Activated T-helper 1 cell treated with anti-CD3 and anti-CD28 coated beads, Interleukin-12 subunit alpha, Interleukin-12 subunit beta, Interleukin-2, Interleukin-4 antibody, amounts not matched to agents 30 ng/mL and 10 ng/mL and 1 ng/mL, durations not matched to agents 14 hours and 24 hours and 36 hours (primary cell): ENCODE measurements at regions of chr5 and their contacts with region 1.

Region 1: GRCh38 chr5:171907725-171908343 is 98.6 kb downstream of the FBXW11 start:
- DNase-seq: peak; percentile 33
- H3K4me3 Mint-ChIP-seq: no peak overlapping the region
- H3K27ac Mint-ChIP-seq: peak overlapping the region; percentile 89
- H3K4me1 Mint-ChIP-seq: peaks cover 45% of the 10 kb centered on the region
- H3K27me3 Mint-ChIP-seq: no peaks in the 10 kb centered on the region

Region 2: GRCh38 chr5:170638454-170639220 is 1269.2 kb before region 1 on chr5:
- intact Hi-C with region 1: loop called (anchors 2 kb)
- DNase-seq: peak; percentile 38
- H3K4me3 Mint-ChIP-seq: no peak overlapping the region
- H3K27ac Mint-ChIP-seq: no peak overlapping the region
- H3K4me1 Mint-ChIP-seq: no peaks in the 10 kb centered on the region
- H3K27me3 Mint-ChIP-seq: peaks cover 13% of the 10 kb centered on the region

Region 3: DNA sequence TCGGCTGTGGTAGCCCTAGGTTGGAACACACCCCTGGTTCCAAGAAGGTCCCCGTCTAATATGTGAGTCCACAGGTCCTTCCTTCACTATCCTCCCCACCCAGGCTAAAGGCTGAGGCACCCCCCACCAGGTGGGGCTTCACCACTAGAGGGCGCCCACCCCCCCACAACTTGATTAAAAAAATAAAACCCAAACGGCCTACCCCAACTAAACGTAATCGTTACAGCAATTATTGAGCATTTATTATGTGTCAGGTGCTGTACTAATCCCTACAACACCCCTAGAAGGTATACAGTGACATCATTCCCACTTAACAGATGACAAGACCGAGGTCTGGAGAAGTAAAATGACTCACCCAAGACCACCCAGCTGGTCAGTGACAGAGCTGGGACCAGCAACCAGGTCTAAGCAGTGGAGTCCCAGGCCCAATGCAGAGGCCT is 423.4 kb before region 1 on chr5:
- intact Hi-C with region 1: loop called (anchors 1 kb)
- DNase-seq: no peak
- H3K4me3 Mint-ChIP-seq: no peak overlapping the region
- H3K27ac Mint-ChIP-seq: no peak overlapping the region
- H3K4me1 Mint-ChIP-seq: peaks cover 6% of the 10 kb centered on the region
- H3K27me3 Mint-ChIP-seq: peaks cover 4% of the 10 kb centered on the region

Region 4: DNA sequence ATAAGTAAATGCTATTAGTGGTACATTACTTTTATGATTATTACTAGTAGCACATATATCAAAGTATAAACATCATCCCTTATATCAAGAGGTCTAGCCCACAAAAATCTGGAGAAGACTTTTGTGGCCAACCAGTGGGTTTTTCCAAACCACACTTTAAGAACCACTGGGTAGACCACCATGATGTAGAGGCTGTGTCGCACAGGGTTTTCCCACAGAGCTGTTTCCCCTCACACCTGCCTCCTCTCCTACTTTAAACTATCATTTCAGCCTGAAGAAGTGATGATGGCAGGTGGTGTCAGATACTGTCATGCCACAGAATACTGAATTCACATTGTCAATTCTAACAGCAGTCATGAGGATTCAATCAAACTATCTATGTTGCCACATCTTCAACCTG is 10.6 kb before region 1 on chr5:
- intact Hi-C with region 1: loop called (anchors 1 kb)
- DNase-seq: no peak
- H3K4me3 Mint-ChIP-seq: no peak overlapping the region
- H3K27ac Mint-ChIP-seq: no peak overlapping the region
- H3K4me1 Mint-ChIP-seq: peaks cover 25% of the 10 kb centered on the region
- H3K27me3 Mint-ChIP-seq: no peaks in the 10 kb centered on the region

Region 5: DNA sequence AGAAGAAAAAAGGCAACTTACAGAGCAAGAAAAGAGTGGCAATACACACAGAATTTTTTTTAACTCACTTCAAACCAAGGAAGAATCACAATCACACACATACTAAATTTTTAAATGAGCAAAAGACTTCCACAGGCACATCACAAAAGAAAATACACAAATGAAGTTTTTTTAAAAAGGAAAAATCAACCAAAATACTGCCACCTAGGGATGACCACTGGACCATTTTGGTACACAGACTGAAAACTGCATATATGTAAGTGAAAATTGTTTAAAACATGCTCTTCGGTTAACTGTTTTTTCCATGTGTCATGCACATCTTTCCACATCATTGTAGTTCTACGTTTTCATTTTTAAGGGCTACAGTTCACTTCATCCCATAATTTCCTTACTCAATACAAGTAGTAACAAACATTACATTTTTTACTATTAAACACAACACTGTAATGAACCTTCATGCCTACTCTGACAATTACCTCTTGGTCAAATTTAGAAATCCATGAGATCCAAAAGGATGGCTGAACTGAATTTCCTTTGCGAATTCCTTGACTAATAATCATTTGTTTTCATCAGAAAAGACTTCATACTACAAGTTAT is 19.6 kb after region 1 on chr5:
- intact Hi-C with region 1: no loop called
- DNase-seq: no peak
- H3K4me3 Mint-ChIP-seq: no peak overlapping the region
- H3K27ac Mint-ChIP-seq: no peak overlapping the region
- H3K4me1 Mint-ChIP-seq: peaks cover 22% of the 10 kb centered on the region
- H3K27me3 Mint-ChIP-seq: no peaks in the 10 kb centered on the region

Region 6: GRCh38 chr5:172006321-172007174 is 98.7 kb after region 1 on chr5 and contains the start of gene FBXW11:
- intact Hi-C with region 1: loop called (anchors 1 kb)
- DNase-seq: peak; percentile 93
- H3K4me3 Mint-ChIP-seq: peak within 1 kb of the TSS; percentile 95
- H3K27ac Mint-ChIP-seq: peak within 1 kb of the TSS; percentile 95
- H3K4me1 Mint-ChIP-seq: peaks cover 57% of the 10 kb centered on the region
- H3K27me3 Mint-ChIP-seq: no peaks in the 10 kb centered on the region
- total RNA-seq, gene FBXW11: 55.6 and 57.9 TPM in 2 replicates

Region 7: GRCh38 chr5:172179361-172179989 is 271.6 kb after region 1 on chr5:
- intact Hi-C with region 1: loop called (anchors 2 kb)
- DNase-seq: peak; percentile 51
- H3K4me3 Mint-ChIP-seq: peak overlapping the region; percentile 87
- H3K27ac Mint-ChIP-seq: peak overlapping the region; percentile 100
- H3K4me1 Mint-ChIP-seq: peaks cover 87% of the 10 kb centered on the region
- H3K27me3 Mint-ChIP-seq: no peaks in the 10 kb centered on the region

Region 8: DNA sequence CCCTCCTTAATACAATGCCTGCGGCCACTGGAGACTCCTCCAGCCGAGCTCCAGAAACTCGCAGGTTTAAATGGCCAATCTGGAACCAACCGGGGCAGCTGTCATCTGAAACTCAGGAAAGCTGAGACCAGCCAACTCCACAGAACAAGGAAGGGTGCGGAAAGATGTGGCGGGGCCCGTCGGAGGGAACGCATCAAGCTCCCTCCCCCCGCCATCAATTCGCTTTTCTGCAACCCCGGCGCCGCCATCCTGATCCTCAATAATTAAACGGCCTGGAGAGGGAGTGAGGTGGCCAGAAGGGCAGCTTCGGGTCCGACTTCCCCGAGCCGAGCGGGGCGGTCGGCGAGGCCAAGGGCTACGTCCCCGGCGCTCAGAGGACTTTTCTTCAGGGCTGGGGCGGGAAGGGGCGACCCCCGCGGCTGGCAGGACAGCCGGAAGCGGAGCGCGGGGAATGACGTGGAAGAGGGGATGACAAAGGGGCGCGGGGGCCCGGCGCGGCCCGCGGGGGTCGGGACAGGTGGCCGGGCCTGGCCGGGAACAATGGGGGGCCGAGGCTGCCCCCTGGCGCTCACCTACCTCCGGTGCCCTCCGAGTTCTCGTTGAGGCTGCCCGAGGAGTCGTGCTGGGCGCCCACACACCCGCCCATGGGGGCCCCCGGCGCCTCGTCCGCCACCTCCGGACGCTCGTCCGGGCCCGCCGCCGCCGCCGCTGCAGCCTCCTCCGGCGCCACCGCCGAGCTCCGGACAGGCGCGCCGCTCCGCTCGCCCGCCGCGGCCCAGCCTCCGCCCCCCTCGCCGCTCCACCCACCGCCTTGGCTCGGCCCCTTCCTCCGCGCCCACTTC is 375.4 kb after region 1 on chr5 and contains the start of gene UBTD2:
- intact Hi-C with region 1: loop called (anchors 5 kb)
- DNase-seq: peak; percentile 74
- H3K4me3 Mint-ChIP-seq: peak within 1 kb of the TSS; percentile 87
- H3K27ac Mint-ChIP-seq: peak within 1 kb of the TSS; percentile 73
- H3K4me1 Mint-ChIP-seq: peaks cover 16% of the 10 kb centered on the region
- H3K27me3 Mint-ChIP-seq: peaks cover 30% of the 10 kb centered on the region
- total RNA-seq, gene UBTD2: 5.0 and 6.1 TPM in 2 replicates